CD4-positive, alpha-beta T cell (primary cell): ENCODE measurements at regions of chr14 and their contacts with region 1.

Region 1: DNA sequence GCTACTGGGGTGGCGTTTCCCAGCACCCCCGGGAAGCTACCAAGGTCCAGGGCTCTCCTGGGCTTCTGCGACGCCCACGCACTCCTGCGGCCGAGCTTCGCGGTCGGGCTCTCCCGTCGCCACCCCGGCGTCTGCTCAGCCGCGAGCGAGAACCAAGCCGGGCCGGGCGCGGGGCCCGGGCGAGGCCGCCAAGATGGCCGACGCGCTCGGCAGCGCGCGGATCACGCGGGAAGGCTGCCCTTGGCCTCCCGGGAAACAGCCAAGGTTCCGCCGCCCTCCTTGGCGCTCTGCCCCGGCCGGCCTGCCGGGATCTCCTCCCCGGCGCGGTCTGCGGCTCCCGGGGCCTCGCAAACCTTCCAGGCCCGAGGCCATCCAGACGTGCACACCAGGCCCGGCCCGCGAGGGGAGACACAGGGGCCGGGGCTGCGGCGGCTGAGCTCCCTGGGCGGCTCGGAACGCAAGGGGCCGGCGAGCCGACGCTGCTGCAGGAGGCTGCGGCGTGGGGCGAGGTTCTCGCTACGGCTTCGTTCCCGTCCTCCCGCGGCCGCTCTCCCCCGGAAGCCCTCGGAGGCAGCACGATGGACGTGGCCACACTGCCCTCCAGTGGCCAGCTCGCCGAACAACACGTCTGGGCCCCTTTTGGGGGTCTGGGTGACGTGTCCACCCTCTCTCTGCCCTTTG is 23.5 kb upstream of the ZFP36L1 start:
- DNase-seq: peak; percentile 80 to 94 (median 88)
- ATAC-seq: peak; percentile 62
- H3K4me3 ChIP-seq: peak overlapping the region; percentile 64
- H3K4me3 Mint-ChIP-seq: peak overlapping the region; percentile 91
- H3K27ac ChIP-seq: peak overlapping the region; percentile 92 to 93
- H3K27ac Mint-ChIP-seq: peak overlapping the region; percentile 95
- H3K4me1 ChIP-seq: peaks cover 89% of the 10 kb centered on the region
- H3K4me1 Mint-ChIP-seq: peaks cover 79% of the 10 kb centered on the region
- H3K27me3 ChIP-seq: no peaks in the 10 kb centered on the region
- H3K27me3 Mint-ChIP-seq: no peaks in the 10 kb centered on the region
- CTCF ChIP-seq: peak; percentile 96

Region 2: DNA sequence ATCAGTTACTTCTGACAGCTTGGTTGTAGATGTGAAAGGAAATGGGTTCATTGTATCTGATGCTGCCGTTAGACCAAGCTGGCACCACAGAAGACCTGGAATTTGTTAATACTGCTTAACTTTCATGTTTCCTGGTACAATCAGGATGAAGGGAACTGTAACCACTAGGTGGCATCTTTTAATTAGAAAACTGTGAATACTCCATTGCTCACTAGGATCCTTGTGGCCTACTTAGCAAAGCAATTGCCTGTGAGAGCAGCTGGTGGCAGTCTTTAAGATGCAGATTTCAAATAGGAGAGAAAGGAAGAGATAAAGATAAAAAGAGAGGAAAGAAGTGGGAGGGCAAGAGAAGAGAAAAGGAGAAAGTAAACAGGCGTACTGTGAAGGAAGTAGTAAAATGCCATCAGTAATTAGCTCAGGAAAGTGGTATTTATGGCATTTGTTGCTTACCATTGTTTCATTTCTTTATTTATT is 882.4 kb before region 1 on chr14:
- CTCF ChIA-PET with region 1: interaction called, 6 read pairs
- POLR2A ChIA-PET with region 1: interaction called, 4 read pairs
- intact Hi-C with region 1: loop called (anchors 2 kb)
- DNase-seq: peak in 4 of 14 experiments; percentile 29 to 69 (median 66)
- ATAC-seq: peak; percentile 67
- H3K4me3 ChIP-seq: no peak overlapping the region
- H3K4me3 Mint-ChIP-seq: no peak overlapping the region
- H3K27ac ChIP-seq: no peak overlapping the region
- H3K27ac Mint-ChIP-seq: peak overlapping the region; percentile 17
- H3K4me1 ChIP-seq: no peaks in the 10 kb centered on the region
- H3K4me1 Mint-ChIP-seq: peaks cover 6% of the 10 kb centered on the region
- H3K27me3 ChIP-seq: no peaks in the 10 kb centered on the region
- H3K27me3 Mint-ChIP-seq: no peaks in the 10 kb centered on the region
- CTCF ChIP-seq: peak; percentile 76

Region 3: GRCh38 chr14:68283378-68284123 is 532.9 kb before region 1 on chr14:
- CTCF ChIA-PET with region 1: interaction called, 7 read pairs
- POLR2A ChIA-PET with region 1: interaction called, 50 read pairs
- intact Hi-C with region 1: no loop called
- DNase-seq: peak; percentile 47 to 86 (median 66)
- ATAC-seq: peak; percentile 73
- H3K4me3 ChIP-seq: no peak overlapping the region
- H3K4me3 Mint-ChIP-seq: peak overlapping the region; percentile 56
- H3K27ac ChIP-seq: peak overlapping the region; percentile 76 to 88
- H3K27ac Mint-ChIP-seq: peak overlapping the region; percentile 99
- H3K4me1 ChIP-seq: peaks cover 62% of the 10 kb centered on the region
- H3K4me1 Mint-ChIP-seq: peaks cover 94% of the 10 kb centered on the region
- H3K27me3 ChIP-seq: no peaks in the 10 kb centered on the region
- H3K27me3 Mint-ChIP-seq: no peaks in the 10 kb centered on the region
- CTCF ChIP-seq: peak; percentile 23

Region 4: GRCh38 chr14:68795597-68796417 is 20.6 kb before region 1 on chr14:
- CTCF ChIA-PET with region 1: interaction called, 115 read pairs
- POLR2A ChIA-PET with region 1: interaction called, 816 read pairs
- intact Hi-C with region 1: loop called (anchors 1 kb)
- DNase-seq: peak; percentile 66 to 95 (median 80)
- ATAC-seq: peak; percentile 43
- H3K4me3 ChIP-seq: peak overlapping the region; percentile 98
- H3K4me3 Mint-ChIP-seq: peak overlapping the region; percentile 92
- H3K27ac ChIP-seq: peak overlapping the region; percentile 100
- H3K27ac Mint-ChIP-seq: peak overlapping the region; percentile 99
- H3K4me1 ChIP-seq: peaks cover 29% of the 10 kb centered on the region
- H3K4me1 Mint-ChIP-seq: peaks cover 49% of the 10 kb centered on the region
- H3K27me3 ChIP-seq: no peaks in the 10 kb centered on the region
- H3K27me3 Mint-ChIP-seq: no peaks in the 10 kb centered on the region
- CTCF ChIP-seq: peak; percentile 77